ENCODE measurements at regions of chr6 and their contacts with region 1.

Region 1: GRCh38 chr6:118283766-118284165 is 264.3 kb upstream of the PLN start:
- DNase-seq: peak; percentile 47 to 76 (median 64)
- H3K4me3 ChIP-seq: peak overlapping the region in 1 of 4 donors; percentile 19
- H3K27ac ChIP-seq: no peak overlapping the region
- H3K4me1 ChIP-seq: no peaks in the 10 kb centered on the region
- H3K27me3 ChIP-seq: no peaks in the 10 kb centered on the region
- CTCF ChIP-seq: peak; percentile 62 to 87 (median 79)
- POLR2A ChIP-seq: no peak

Region 2: DNA sequence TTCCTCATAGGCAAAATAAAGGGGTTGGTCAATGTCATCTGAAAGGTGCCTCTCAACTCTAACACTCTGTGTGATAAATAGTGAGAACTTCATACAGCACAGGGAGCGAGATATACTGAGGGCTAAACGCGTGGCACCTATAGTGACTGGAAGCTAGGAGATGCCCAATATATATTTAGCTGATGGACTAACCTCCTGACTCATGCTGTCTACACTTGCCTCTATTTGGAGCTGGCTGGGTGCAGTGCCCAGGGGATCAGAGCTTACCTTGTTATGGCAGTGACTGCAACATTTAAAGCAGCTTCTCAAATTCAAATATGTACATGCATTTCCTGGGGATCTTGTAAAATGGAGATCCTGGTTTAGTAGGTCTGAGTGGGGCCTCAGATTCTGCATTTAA is 152.7 kb after region 1 on chr6:
- intact Hi-C with region 1: no loop called
- DNase-seq: no peak
- H3K4me3 ChIP-seq: no peak overlapping the region
- H3K27ac ChIP-seq: no peak overlapping the region
- H3K4me1 ChIP-seq: no peaks in the 10 kb centered on the region
- H3K27me3 ChIP-seq: no peaks in the 10 kb centered on the region
- CTCF ChIP-seq: no peak
- POLR2A ChIP-seq: no peak

Region 3: DNA sequence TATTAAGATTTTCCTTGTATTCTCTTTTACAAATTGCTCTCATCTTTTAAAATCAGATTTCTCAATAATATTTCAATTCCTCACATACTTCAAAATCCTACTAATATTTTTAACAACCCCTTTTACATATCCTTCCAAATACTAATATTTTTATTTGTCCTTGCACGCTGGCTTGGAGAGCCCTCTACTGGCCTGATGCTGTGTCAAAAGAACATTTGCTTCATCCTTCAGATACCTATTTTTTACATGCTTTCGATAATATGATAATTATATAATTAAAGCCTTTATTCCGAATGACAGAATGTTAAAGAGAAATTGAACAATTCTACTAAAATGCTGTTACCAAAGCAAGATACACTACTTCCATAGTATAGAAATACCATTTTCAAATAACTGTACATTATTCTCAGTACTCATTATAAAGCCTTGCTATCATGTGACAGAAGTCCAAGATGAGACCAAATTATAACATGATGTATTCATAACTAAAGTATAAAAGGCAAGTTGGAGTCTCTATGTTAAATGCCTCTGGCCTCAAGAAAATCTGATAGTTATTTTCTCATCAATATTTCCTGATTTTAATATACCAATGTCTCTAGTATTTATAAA is 225.3 kb after region 1 on chr6:
- intact Hi-C with region 1: loop called (anchors 5 to 10 kb)
- DNase-seq: peak in 2 of 7 donors; percentile 30 to 49
- H3K4me3 ChIP-seq: no peak overlapping the region
- H3K27ac ChIP-seq: no peak overlapping the region
- H3K4me1 ChIP-seq: peaks cover 0 to 10% of the 10 kb centered on the region in 2 donors
- H3K27me3 ChIP-seq: no peaks in the 10 kb centered on the region
- CTCF ChIP-seq: peak; percentile 34 to 65 (median 54)
- POLR2A ChIP-seq: no peak

Region 4: GRCh38 chr6:118551063-118552053 is 267.6 kb after region 1 on chr6:
- intact Hi-C with region 1: loop called in 1 of 2 experiments (anchors 5 kb)
- DNase-seq: no peak
- H3K4me3 ChIP-seq: no peak overlapping the region
- H3K27ac ChIP-seq: no peak overlapping the region
- H3K4me1 ChIP-seq: peaks cover 12 to 39% of the 10 kb centered on the region in 2 donors
- H3K27me3 ChIP-seq: no peaks in the 10 kb centered on the region
- CTCF ChIP-seq: peak; percentile 37 to 68 (median 56)
- POLR2A ChIP-seq: no peak

Region 5: DNA sequence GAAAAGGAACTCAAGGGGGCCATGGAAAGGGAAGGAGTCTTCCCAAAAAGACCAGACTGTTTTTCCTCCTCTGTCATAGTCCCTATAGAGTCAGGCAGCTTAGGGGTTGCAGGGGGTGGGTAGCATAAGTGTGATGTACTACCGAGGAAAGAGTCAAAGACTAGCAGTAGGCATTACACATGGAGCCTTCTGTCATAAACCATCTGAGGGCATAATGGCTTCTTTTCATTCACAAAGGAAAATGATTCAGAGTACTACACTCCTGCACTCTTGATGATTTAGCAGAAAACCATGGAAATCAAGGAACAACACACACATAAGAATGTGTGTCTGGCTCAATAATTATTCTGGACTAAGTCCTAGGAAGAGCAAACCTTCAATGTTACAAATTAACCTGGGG is 279.2 kb after region 1 on chr6:
- intact Hi-C with region 1: no loop called
- DNase-seq: no peak
- H3K4me3 ChIP-seq: no peak overlapping the region
- H3K27ac ChIP-seq: no peak overlapping the region
- H3K4me1 ChIP-seq: peaks cover 5 to 19% of the 10 kb centered on the region in 2 donors
- H3K27me3 ChIP-seq: no peaks in the 10 kb centered on the region
- CTCF ChIP-seq: no peak
- POLR2A ChIP-seq: no peak

Region 6: DNA sequence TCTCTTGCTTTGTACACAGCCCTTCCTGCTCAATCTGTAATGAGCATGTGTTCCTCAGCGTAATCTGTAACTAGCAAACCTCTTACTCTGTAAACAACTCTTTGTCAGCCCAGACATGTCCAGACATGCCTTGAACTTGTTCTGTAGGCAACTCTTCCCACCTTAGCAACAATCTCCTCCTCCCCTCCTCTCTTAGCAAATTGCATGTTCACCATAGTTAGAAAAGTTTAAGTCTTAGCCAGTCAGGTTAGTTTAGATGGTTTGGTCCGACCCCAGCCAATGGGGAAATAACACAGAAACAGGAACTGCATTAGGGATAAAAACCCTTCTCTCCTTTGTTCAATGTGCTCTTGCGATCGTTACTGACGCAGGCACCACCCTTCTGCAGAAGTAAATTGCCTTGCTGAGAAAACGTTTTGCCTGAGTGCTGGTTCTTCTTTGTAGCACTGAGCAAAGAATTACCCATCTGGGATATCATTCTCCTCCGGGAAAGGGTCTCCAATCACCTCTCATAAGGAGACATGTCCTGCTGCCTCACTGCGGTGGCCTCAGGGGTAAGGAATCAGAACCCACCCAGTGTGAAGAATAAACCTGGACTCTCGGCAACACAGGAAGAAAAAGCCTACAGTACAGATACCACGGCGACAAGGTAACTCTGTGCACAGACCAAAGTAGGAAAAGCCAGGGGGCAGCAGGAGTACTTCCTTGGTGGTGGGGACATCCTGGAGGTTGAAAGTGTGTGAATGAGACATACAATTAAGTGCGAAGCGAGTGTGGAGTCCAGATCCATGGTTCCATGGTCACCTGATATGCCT is 290.5 kb after region 1 on chr6:
- intact Hi-C with region 1: loop called in 1 of 2 experiments (anchors 10 kb)
- DNase-seq: no peak
- H3K4me3 ChIP-seq: no peak overlapping the region
- H3K27ac ChIP-seq: no peak overlapping the region
- H3K4me1 ChIP-seq: no peaks in the 10 kb centered on the region
- H3K27me3 ChIP-seq: no peaks in the 10 kb centered on the region
- CTCF ChIP-seq: no peak
- POLR2A ChIP-seq: no peak

Region 7: DNA sequence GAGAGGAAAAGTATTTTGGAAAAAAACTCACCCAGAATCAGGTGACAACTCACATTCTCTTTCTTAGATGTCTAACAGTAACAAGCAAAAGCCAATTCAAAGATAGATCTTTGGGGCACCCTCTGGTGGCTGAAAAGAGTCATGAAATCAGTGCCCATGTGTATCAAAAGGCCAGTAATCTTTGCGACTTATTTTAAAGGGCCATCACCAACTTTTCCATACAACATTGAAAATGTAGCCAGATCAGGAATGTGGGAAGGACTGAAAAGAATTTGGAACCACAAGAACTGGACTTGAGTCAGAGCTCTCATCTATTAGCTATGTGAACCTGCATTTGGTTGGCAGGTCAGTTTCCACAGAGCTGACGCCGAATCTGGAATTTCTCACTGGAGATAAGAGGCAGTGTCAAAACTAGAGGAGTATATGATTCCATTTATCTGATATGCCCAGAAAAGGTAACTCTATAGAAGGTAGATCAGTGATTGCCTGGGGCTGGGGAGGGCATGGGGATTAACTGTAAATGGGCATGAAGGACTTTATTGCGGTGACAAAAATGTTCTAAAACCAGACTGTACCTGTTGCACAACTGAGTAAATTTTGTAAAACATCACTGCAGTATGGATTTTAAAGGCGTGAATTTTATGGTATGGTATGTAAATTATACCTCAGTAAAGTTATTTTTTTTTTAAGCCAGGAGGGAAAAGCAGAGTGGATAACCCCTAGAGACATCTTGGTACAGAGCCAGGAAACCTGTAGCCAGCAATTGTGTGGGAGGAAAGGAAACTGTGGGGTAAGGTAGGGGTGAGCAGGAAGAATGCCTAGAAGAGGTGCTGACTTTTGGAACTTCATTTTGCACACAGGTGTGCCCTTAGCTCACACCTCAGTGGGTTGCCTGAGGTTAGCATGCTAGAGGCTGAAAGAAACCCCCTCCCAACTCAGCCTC is 493.1 kb after region 1 on chr6:
- intact Hi-C with region 1: loop called (anchors 10 kb)
- DNase-seq: peak; percentile 76 to 95 (median 84)
- H3K4me3 ChIP-seq: no peak overlapping the region
- H3K27ac ChIP-seq: no peak overlapping the region
- H3K4me1 ChIP-seq: peaks cover 4 to 6% of the 10 kb centered on the region in 2 donors
- H3K27me3 ChIP-seq: no peaks in the 10 kb centered on the region
- CTCF ChIP-seq: peak; percentile 73 to 89 (median 86)
- POLR2A ChIP-seq: no peak

Region 8: DNA sequence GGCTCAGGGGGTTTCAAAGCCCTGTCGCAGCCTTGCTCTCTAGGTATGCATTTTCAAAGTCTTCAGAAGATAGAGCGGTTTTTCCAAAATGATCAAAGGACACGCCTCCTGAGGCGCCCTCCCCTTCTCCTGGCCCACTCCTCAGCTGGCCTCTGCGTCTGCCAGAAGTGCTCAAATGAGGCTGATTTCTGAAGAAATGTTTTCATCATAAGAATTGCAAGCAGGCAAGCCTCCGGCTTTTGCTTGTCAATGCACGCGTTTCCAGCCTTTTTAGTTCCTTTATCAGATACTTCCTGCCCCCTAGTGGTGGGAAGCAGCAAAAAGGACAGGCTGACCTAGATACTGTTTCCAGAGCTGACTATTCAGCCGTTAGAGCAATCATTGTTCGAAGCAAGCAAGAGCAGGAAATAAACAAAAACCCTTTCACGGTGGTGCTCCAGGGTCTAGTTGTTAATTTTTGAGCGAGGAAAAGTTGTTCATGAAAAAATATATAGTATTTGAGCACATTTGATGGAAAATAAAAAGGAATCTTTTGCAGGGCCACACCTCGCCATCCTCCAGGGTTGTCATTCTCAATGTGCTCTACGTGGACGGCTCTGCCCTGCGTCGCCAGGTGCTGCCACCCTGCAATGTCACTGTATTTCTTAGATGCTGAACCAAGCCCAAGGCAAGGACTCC is 516.8 kb after region 1 on chr6:
- intact Hi-C with region 1: loop called in 1 of 2 experiments (anchors 10 kb)
- DNase-seq: peak; percentile 87 to 97 (median 93)
- H3K4me3 ChIP-seq: peak overlapping the region in 1 of 4 donors; percentile 28
- H3K27ac ChIP-seq: no peak overlapping the region
- H3K4me1 ChIP-seq: peaks cover 0 to 9% of the 10 kb centered on the region in 2 donors
- H3K27me3 ChIP-seq: no peaks in the 10 kb centered on the region
- CTCF ChIP-seq: peak; percentile 81 to 94 (median 88)
- POLR2A ChIP-seq: no peak